ENCODE measurements at regions of chr5 and their contacts with region 1.

Region 1: GRCh38 chr5:178732281-178732680 is 1.8 kb upstream of the ZNF354A start:
- DNase-seq: no peak
- ATAC-seq: no peak
- H3K4me3 ChIP-seq: no peak overlapping the region
- H3K27ac ChIP-seq: no peak overlapping the region
- H3K4me1 ChIP-seq: peaks cover 0 to 3% of the 10 kb centered on the region in 2 experiments; a peak in 1 of 4 replicates
- H3K27me3 ChIP-seq: no peaks in the 10 kb centered on the region
- CTCF ChIP-seq: no peak
- POLR2A ChIP-seq: no peak
- RAD21 ChIP-seq: no peak

Region 2: DNA sequence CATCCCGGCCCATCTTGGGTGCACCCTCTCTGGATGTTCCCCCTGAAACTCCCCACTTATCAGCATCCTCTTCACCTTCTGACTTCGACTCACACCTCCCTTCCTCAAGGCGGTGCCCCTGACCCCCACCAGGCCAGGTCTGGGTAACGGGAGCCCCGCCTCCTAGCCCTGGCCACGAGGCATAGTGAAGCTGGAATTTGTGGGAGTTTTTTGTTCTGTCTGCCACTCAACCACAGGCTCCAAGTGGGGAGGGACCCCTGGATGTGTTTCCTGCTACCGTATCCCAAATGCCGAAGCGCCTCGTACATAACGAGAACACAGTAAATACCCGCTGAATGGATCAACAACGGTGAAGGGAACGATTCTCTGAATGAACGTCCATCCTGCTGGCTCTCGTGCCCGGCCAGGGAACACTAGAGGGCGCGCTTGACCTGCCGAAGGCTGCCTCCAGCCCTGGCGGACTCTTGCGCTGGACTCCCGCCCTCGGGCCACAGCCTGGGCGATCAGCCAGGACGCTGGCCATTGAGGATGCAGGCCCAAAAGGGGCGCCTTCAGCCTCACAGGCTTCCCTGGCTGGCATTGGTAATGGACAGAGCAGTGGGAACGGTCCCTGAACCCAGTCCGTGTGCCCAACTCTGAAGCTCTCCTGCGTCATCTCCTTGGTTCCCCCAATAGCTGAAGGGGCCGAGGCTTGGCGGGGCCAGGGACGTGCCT is 452.4 kb before region 1 on chr5:
- CTCF ChIA-PET with region 1: no interaction called
- POLR2A ChIA-PET with region 1: no interaction called
- RAD21 ChIA-PET with region 1: no interaction called
- intact Hi-C with region 1: loop called (anchors 2 kb)
- DNase-seq: peak; percentile 49
- ATAC-seq: peak; percentile 97
- H3K4me3 ChIP-seq: no peak overlapping the region
- H3K27ac ChIP-seq: no peak overlapping the region
- H3K4me1 ChIP-seq: peaks cover 0 to 4% of the 10 kb centered on the region in 2 experiments; a peak in 2 of 4 replicates
- H3K27me3 ChIP-seq: no peaks in the 10 kb centered on the region
- CTCF ChIP-seq: peak; percentile 87 to 97 (median 95)
- POLR2A ChIP-seq: no peak
- RAD21 ChIP-seq: peak; percentile 98

Region 3: GRCh38 chr5:178461004-178461730 is 271.1 kb before region 1 on chr5:
- CTCF ChIA-PET with region 1: interaction called, 3 read pairs
- POLR2A ChIA-PET with region 1: no interaction called
- RAD21 ChIA-PET with region 1: no interaction called
- intact Hi-C with region 1: loop called (anchors 1 kb)
- DNase-seq: peak; percentile 54
- ATAC-seq: peak; percentile 100
- H3K4me3 ChIP-seq: no peak overlapping the region
- H3K27ac ChIP-seq: no peak overlapping the region
- H3K4me1 ChIP-seq: peaks cover 0 to 3% of the 10 kb centered on the region in 2 experiments; a peak in 1 of 4 replicates
- H3K27me3 ChIP-seq: no peaks in the 10 kb centered on the region
- CTCF ChIP-seq: peak; percentile 49 to 94 (median 86); a peak in 5 of 6 replicates
- POLR2A ChIP-seq: no peak
- RAD21 ChIP-seq: peak; percentile 64

Region 4: DNA sequence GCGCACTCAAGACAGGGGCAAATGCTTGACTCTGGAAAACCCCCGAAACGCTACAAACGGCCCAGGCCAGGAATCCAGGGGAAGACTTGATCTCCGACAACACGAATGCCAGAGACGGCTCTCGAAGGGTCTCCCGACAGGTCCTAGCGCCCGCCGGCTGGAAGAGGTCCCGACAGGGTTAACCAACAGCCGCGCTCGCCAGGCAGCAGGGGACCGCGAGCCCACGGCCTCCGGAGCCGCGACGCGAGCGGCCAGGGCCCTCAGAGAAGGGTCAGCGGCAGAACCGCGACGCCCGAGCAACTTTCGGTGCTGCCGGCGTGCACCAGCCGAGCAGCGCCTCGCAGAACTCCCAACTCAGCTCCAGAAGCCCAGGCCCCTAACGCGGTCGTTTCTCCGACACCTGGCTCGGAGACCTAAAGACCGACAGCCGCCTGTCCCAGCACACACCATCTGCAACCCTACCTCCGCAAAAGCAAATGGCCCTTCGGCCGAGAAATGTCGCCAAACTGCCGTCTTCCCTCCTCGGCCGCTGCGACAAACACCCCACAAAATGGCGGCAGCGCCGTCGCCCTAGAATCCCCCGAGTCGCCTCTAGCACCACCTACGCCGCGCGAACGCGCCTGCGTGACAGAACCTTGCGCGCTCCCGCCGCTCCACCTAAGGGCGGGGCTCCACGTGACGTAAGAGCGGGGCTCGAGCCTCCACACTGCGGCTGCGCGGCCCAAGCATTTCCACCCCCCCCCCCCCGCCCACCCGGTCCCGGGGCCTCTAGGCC is 105.6 kb before region 1 on chr5 and contains the start of gene CLK4:
- CTCF ChIA-PET with region 1: no interaction called
- POLR2A ChIA-PET with region 1: no interaction called
- RAD21 ChIA-PET with region 1: no interaction called
- intact Hi-C with region 1: loop called (anchors 5 kb)
- DNase-seq: peak; percentile 88
- ATAC-seq: peak; percentile 91
- H3K4me3 ChIP-seq: peak within 1 kb of the TSS; percentile 86 to 94
- H3K27ac ChIP-seq: peak within 1 kb of the TSS; percentile 84
- H3K4me1 ChIP-seq: peaks cover 11 to 30% of the 10 kb centered on the region in 2 experiments
- H3K27me3 ChIP-seq: no peaks in the 10 kb centered on the region
- CTCF ChIP-seq: no peak
- POLR2A ChIP-seq: peak; percentile 77
- RAD21 ChIP-seq: no peak
- total RNA-seq, gene CLK4: 9.8 TPM

Region 5: GRCh38 chr5:178777541-178777940 is 45.3 kb after region 1 on chr5:
- CTCF ChIA-PET with region 1: no interaction called
- POLR2A ChIA-PET with region 1: no interaction called
- RAD21 ChIA-PET with region 1: no interaction called
- intact Hi-C with region 1: no loop called
- DNase-seq: no peak
- ATAC-seq: no peak
- H3K4me3 ChIP-seq: no peak overlapping the region
- H3K27ac ChIP-seq: no peak overlapping the region
- H3K4me1 ChIP-seq: no peaks in the 10 kb centered on the region
- H3K27me3 ChIP-seq: no peaks in the 10 kb centered on the region
- CTCF ChIP-seq: no peak
- POLR2A ChIP-seq: no peak
- RAD21 ChIP-seq: no peak

Region 6: GRCh38 chr5:178838695-178839685 is 106.7 kb after region 1 on chr5:
- CTCF ChIA-PET with region 1: no interaction called
- POLR2A ChIA-PET with region 1: no interaction called
- RAD21 ChIA-PET with region 1: no interaction called
- intact Hi-C with region 1: loop called (anchors 5 kb)
- DNase-seq: peak; percentile 16
- ATAC-seq: peak; percentile 88
- H3K4me3 ChIP-seq: no peak overlapping the region
- H3K27ac ChIP-seq: no peak overlapping the region
- H3K4me1 ChIP-seq: no peaks in the 10 kb centered on the region
- H3K27me3 ChIP-seq: no peaks in the 10 kb centered on the region
- CTCF ChIP-seq: peak; percentile 47 to 66 (median 61); a peak in 5 of 6 replicates
- POLR2A ChIP-seq: no peak
- RAD21 ChIP-seq: peak; percentile 77

Region 7: GRCh38 chr5:178859625-178860531 is 127.6 kb after region 1 on chr5 and contains the start of gene ZNF354B:
- CTCF ChIA-PET with region 1: interaction called, 16 read pairs
- POLR2A ChIA-PET with region 1: interaction called, 6 read pairs
- RAD21 ChIA-PET with region 1: no interaction called
- intact Hi-C with region 1: loop called (anchors 1 kb)
- DNase-seq: peak; percentile 86
- ATAC-seq: peak; percentile 97
- H3K4me3 ChIP-seq: peak within 1 kb of the TSS; percentile 57 to 73
- H3K27ac ChIP-seq: peak within 1 kb of the TSS; percentile 71
- H3K4me1 ChIP-seq: peaks cover 5 to 10% of the 10 kb centered on the region in 2 experiments; a peak in 2 of 4 replicates
- H3K27me3 ChIP-seq: no peaks in the 10 kb centered on the region
- CTCF ChIP-seq: no peak
- POLR2A ChIP-seq: no peak
- RAD21 ChIP-seq: no peak
- total RNA-seq, gene ZNF354B: 11.6 TPM

Region 8: DNA sequence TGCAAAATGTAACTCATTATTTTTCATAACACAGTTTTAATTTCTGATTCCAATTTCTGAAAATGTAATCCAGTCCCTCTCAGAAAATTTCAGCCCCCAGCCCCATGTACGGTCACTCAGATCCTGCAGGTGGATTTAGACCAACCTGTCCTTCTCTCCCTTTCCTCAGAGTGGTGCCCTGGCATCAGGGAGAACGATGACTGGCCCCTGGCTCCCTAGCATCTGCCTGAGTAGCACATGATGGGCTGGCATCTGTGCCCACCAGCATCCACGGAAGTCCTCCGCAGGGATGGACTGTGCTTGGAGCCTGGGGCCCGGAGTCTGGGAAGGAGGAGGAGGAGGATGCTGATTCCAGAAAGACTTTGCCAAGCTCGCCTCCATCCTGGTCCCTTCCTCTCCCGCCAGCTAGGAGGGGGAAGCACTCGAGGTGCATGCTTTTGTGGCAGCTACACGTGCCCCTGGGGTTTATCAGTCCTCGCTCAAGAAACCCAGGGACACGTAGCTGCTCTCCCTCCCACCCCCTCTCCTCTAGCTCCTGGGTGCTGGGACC is 763.7 kb after region 1 on chr5:
- CTCF ChIA-PET with region 1: interaction called, 5 read pairs
- POLR2A ChIA-PET with region 1: no interaction called
- RAD21 ChIA-PET with region 1: no interaction called
- intact Hi-C with region 1: loop called (anchors 1 kb)
- DNase-seq: no peak
- ATAC-seq: no peak
- H3K4me3 ChIP-seq: no peak overlapping the region
- H3K27ac ChIP-seq: no peak overlapping the region
- H3K4me1 ChIP-seq: no peaks in the 10 kb centered on the region
- H3K27me3 ChIP-seq: no peaks in the 10 kb centered on the region
- CTCF ChIP-seq: peak in 1 of 3 experiments; percentile 33; a peak in 1 of 6 replicates
- POLR2A ChIP-seq: no peak
- RAD21 ChIP-seq: peak; percentile 62